H1 (cell line): ENCODE measurements at regions of chr22 and their contacts with region 1.

Region 1: DNA sequence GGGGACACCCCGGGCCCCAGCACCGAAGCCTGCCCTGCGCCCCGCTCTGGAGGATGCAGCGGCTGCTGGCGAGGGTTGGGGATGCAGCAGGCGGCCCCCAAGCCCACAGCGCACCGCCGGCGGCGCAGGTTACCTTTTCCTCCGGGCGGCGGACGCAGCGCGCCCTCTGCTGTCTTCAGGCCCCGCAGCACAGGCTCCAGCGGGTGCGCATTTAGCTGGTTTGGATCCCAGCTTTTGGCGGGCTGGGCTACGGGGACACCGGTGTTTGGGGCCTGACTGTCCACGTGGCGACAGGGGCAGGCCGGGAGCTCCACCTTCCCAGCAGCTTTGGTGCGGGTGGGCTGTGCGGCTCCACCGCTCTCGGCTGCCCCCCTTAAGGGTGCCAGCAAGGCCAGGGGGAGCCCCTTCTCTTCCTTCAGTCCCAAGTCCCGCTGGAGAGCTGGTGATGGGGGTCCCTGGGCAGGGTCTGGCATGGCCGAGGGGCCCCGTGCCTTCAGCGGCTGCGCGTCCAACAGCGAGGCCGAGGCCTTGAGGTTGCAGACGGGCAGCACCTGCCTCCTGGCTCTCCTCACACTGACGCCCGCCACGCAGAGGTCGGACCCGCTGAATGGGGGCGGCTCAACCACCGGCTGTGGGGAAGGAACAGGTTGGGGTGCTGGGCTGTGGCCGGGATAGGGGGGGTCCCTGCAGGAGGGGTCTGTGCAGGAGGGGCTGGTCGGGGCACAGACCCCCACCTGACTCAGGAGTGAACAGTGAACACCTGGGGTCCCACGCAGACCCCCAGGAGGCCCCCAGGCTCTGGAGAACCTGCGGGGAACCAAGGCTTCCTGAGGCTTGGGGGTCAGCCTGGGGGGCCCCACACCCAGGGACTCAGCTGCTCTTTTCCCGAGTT is 18.0 kb upstream of the IL17REL start:
- DNase-seq: peak; percentile 57 to 92
- H3K4me3 ChIP-seq: peak overlapping the region in 1 of 4 experiments; percentile 51; a peak in 2 of 8 replicates
- H3K27ac ChIP-seq: no peak overlapping the region
- H3K4me1 ChIP-seq: peaks cover 0 to 3% (median 0%) of the 10 kb centered on the region in 4 experiments; a peak in 2 of 7 replicates
- H3K27me3 ChIP-seq: peaks cover 2 to 24% (median 11%) of the 10 kb centered on the region in 4 experiments; a peak in 6 of 7 replicates
- CTCF ChIP-seq: peak; percentile 90 to 98 (median 92)
- EP300 ChIP-seq: no peak
- POLR2A ChIP-seq: no peak
- RAD21 ChIP-seq: peak; percentile 96 to 97

Region 2: GRCh38 chr22:49930739-49931412 is 99.7 kb before region 1 on chr22:
- CTCF ChIA-PET with region 1: interaction called, 54 read pairs
- POLR2A ChIA-PET with region 1: interaction called, 5 read pairs
- DNase-seq: no peak
- H3K4me3 ChIP-seq: no peak overlapping the region
- H3K27ac ChIP-seq: no peak overlapping the region
- H3K4me1 ChIP-seq: peaks cover 0 to 8% (median 1%) of the 10 kb centered on the region in 4 experiments; a peak in 2 of 7 replicates
- H3K27me3 ChIP-seq: peaks cover 0 to 12% (median 10%) of the 10 kb centered on the region in 4 experiments; a peak in 6 of 7 replicates
- CTCF ChIP-seq: peak in 2 of 3 experiments; percentile 61 to 62; a peak in 3 of 4 replicates
- EP300 ChIP-seq: no peak
- POLR2A ChIP-seq: no peak
- RAD21 ChIP-seq: peak; percentile 64 to 73

Region 3: GRCh38 chr22:49979587-49980264 is 50.8 kb before region 1 on chr22:
- CTCF ChIA-PET with region 1: interaction called, 27 read pairs
- POLR2A ChIA-PET with region 1: no interaction called
- DNase-seq: peak in 1 of 2 experiments; percentile 57
- H3K4me3 ChIP-seq: no peak overlapping the region
- H3K27ac ChIP-seq: no peak overlapping the region
- H3K4me1 ChIP-seq: peaks cover 0 to 4% (median 0%) of the 10 kb centered on the region in 4 experiments; a peak in 1 of 7 replicates
- H3K27me3 ChIP-seq: peaks cover 4 to 18% (median 13%) of the 10 kb centered on the region in 4 experiments
- CTCF ChIP-seq: peak; percentile 47 to 90 (median 57)
- EP300 ChIP-seq: no peak
- POLR2A ChIP-seq: no peak
- RAD21 ChIP-seq: peak; percentile 33 to 55; a peak in 3 of 4 replicates

Region 4: GRCh38 chr22:49992921-49993648 is 37.5 kb before region 1 on chr22:
- CTCF ChIA-PET with region 1: interaction called, 35 read pairs
- POLR2A ChIA-PET with region 1: interaction called, 4 read pairs
- DNase-seq: peak in 1 of 2 experiments; percentile 73
- H3K4me3 ChIP-seq: no peak overlapping the region
- H3K27ac ChIP-seq: no peak overlapping the region
- H3K4me1 ChIP-seq: peaks cover 0 to 1% (median 0%) of the 10 kb centered on the region in 4 experiments; a peak in 2 of 7 replicates
- H3K27me3 ChIP-seq: peaks cover 0 to 6% (median 0%) of the 10 kb centered on the region in 4 experiments; a peak in 1 of 7 replicates
- CTCF ChIP-seq: peak; percentile 86 to 97 (median 86)
- EP300 ChIP-seq: no peak
- POLR2A ChIP-seq: no peak
- RAD21 ChIP-seq: peak; percentile 72 to 81

Region 5: DNA sequence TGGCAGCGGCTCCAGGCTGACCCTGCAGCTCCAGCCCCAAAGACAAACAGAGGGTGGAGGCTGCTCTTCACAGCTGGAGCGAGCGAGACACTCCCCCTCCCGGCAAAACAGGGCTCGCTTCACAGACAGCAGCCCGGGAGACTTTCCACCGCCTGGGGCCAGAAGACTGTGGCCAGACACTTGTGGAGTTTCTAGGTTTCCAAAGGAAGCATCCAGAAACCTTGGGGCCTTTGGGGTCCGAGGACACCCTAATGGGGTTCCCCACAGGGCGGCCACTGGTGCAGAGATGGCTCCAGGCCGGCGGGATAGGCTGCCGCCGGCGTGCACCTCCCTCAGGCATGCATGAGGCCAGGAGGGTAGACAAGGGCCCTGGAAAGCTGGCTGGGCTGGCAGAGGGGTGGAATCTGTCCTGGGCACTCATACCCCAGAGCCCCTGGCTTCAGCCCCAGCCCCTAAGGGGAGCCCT is 17.8 kb before region 1 on chr22 and contains the start of gene IL17REL:
- CTCF ChIA-PET with region 1: interaction called, 11 read pairs
- POLR2A ChIA-PET with region 1: interaction called, 4 read pairs
- DNase-seq: peak in 1 of 2 experiments; percentile 54
- H3K4me3 ChIP-seq: no peak within 1 kb of the TSS
- H3K27ac ChIP-seq: no peak within 1 kb of the TSS
- H3K4me1 ChIP-seq: peaks cover 0 to 25% (median 16%) of the 10 kb centered on the region in 4 experiments; a peak in 6 of 7 replicates
- H3K27me3 ChIP-seq: peaks cover 21 to 60% (median 46%) of the 10 kb centered on the region in 4 experiments
- CTCF ChIP-seq: no peak
- EP300 ChIP-seq: no peak
- POLR2A ChIP-seq: no peak
- RAD21 ChIP-seq: no peak
- total RNA-seq, gene IL17REL: 0.08 and 0.20 TPM in 2 replicates

Region 6: GRCh38 chr22:50047346-50047745 is 16.8 kb after region 1 on chr22:
- CTCF ChIA-PET with region 1: no interaction called
- POLR2A ChIA-PET with region 1: no interaction called
- DNase-seq: no peak
- H3K4me3 ChIP-seq: no peak overlapping the region
- H3K27ac ChIP-seq: no peak overlapping the region
- H3K4me1 ChIP-seq: no peaks in the 10 kb centered on the region; a peak in 1 of 7 replicates
- H3K27me3 ChIP-seq: no peaks in the 10 kb centered on the region
- CTCF ChIP-seq: no peak
- EP300 ChIP-seq: no peak
- POLR2A ChIP-seq: no peak
- RAD21 ChIP-seq: no peak

Region 7: DNA sequence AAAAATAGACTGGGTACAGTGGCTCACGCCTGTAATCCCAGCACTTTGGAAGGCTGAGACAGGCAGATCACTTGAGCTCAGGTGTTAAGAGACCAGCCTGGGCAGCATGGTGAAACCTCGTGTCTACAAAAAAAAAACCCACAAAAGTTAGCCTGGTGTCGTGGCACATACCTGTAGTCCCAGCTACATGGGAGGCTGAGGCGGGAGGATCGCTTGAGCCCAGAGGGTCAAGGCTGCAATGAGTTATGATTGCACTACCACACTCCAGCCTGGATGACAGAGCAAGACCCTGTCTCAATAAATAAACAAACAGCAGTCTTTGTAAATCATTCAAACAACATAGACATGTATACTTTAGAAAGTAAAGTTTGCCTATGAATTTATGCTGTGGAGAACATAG is 61.8 kb after region 1 on chr22:
- CTCF ChIA-PET with region 1: no interaction called
- POLR2A ChIA-PET with region 1: no interaction called
- DNase-seq: no peak
- H3K4me3 ChIP-seq: no peak overlapping the region
- H3K27ac ChIP-seq: no peak overlapping the region
- H3K4me1 ChIP-seq: no peaks in the 10 kb centered on the region
- H3K27me3 ChIP-seq: no peaks in the 10 kb centered on the region; a peak in 1 of 7 replicates
- CTCF ChIP-seq: no peak
- EP300 ChIP-seq: no peak
- POLR2A ChIP-seq: no peak
- RAD21 ChIP-seq: no peak

Region 8: DNA sequence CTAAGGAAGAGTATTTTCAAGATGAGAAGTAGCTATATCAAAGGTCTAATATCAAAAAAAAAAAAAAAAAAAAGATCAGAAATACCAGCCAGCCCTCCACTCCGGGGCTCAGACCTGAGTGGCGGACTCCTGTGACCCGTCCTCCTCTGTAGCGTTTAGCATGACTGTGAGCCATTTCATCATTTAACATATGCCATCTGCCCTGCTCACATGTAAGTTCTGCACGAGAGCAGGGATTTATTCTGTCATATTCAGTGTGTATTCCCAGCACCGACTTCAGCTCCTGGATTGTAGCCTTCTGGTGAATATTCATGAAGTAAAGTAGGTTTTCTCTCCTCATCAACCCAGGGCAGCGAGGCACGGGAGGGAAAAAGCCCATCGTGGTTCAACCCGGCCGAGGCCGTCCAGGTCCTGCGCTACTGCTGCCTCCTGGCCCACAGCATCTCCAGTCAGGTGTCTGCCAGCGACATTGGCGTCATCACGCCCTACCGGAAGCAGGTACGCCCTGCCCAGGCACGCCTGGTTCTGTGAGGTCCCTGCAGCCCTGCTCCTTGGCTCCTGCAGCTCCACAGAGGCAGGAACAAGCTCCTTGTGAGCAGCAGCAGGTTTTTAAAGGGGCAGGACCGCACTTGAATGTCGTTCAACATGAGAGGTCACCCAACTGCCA is 127.3 kb after region 1 on chr22:
- CTCF ChIA-PET with region 1: no interaction called
- POLR2A ChIA-PET with region 1: no interaction called
- DNase-seq: no peak
- H3K4me3 ChIP-seq: no peak overlapping the region
- H3K27ac ChIP-seq: no peak overlapping the region
- H3K4me1 ChIP-seq: peaks cover 0 to 8% (median 0%) of the 10 kb centered on the region in 4 experiments; a peak in 1 of 7 replicates
- H3K27me3 ChIP-seq: peaks cover 0 to 1% (median 0%) of the 10 kb centered on the region in 4 experiments; a peak in 2 of 7 replicates
- CTCF ChIP-seq: no peak
- EP300 ChIP-seq: no peak
- POLR2A ChIP-seq: no peak
- RAD21 ChIP-seq: no peak